Mammary epithelial cell (primary cell): ENCODE measurements at regions of chr14 and their contacts with region 1.

Region 1: DNA sequence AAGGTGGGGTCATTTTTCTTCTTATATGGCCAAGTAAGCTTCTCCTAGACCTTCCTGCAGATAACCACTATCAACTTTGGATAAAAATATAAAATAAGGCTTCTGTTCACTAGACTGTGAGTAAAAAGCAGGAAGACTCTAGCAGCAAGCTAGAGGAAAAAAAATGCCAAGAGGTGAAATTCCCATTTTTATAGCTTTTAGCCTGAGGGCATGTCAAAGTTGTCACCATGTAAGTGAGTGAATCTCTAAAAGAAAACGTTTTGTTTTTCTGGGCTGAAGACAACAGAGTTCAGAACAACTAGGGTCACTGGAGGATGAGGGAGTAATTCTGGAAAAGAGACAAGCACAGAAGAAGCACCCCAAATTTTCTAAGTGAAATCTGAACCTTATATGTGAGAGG is 143.9 kb upstream of the DIO3 start:
- DNase-seq: no peak
- H3K4me3 ChIP-seq: no peak overlapping the region
- H3K27ac ChIP-seq: no peak overlapping the region
- H3K4me1 ChIP-seq: no peaks in the 10 kb centered on the region
- H3K27me3 ChIP-seq: no peaks in the 10 kb centered on the region
- CTCF ChIP-seq: no peak

Region 2: DNA sequence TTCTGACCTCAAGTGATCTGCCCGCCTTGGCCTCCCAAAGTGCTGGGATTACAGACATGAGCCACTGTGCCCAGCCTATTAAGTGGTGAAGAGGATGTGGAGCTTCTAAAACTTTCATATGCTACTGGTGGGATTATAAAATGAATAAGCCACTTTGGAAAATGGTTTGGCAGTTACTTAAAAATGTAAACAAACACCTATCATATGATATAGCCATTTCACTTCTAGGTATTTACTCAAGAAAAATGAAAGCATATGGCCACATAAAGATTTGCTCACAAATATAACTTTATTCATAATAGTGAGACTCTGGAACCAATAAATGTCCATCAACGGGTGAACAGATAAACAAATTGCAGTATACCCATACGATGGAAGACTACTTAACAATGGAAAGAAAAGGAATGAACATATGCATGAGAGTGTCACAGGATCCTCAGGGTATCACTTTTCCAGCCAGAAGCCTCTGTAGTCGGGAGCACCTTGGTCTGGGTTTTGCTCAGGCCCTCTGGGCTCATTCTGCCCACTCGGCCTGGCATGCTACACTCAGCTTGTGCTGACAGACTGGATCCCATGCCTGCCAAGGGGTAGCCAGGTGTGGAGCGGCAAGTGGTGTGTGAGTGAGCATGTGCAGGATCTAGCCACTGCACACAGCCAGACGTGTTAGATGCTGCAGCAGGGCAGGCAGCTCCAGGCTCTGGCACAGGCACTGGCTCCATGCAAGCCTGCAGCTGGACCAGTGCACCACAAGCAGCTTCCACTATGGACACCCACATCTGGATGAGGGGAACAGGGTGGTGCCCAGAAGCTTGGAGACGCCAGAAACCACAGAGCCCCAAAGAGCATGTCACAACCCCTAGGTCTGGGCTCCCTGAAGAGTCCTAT is 69.3 kb before region 1 on chr14:
- CTCF ChIA-PET with region 1: no interaction called
- dilution Hi-C with region 1: loop called (anchors 5 kb)
- in situ Hi-C with region 1: no loop called
- intact Hi-C with region 1: no loop called
- DNase-seq: no peak
- H3K4me3 ChIP-seq: no peak overlapping the region
- H3K27ac ChIP-seq: no peak overlapping the region
- H3K4me1 ChIP-seq: no peaks in the 10 kb centered on the region
- H3K27me3 ChIP-seq: no peaks in the 10 kb centered on the region
- CTCF ChIP-seq: no peak

Region 3: GRCh38 chr14:101400830-101401229 is 16.6 kb before region 1 on chr14:
- CTCF ChIA-PET with region 1: no interaction called
- dilution Hi-C with region 1: no loop called
- in situ Hi-C with region 1: no loop called
- intact Hi-C with region 1: no loop called
- DNase-seq: no peak
- H3K4me3 ChIP-seq: no peak overlapping the region
- H3K27ac ChIP-seq: no peak overlapping the region
- H3K4me1 ChIP-seq: no peaks in the 10 kb centered on the region
- H3K27me3 ChIP-seq: no peaks in the 10 kb centered on the region
- CTCF ChIP-seq: no peak

Region 4: GRCh38 chr14:101964297-101965144 is 547.1 kb after region 1 on chr14 and contains the start of gene DYNC1H1:
- CTCF ChIA-PET with region 1: no interaction called
- dilution Hi-C with region 1: no loop called
- in situ Hi-C with region 1: no loop called
- intact Hi-C with region 1: no loop called
- DNase-seq: peak; percentile 84
- H3K4me3 ChIP-seq: peak within 1 kb of the TSS; percentile 86 to 97 (median 97)
- H3K27ac ChIP-seq: peak within 1 kb of the TSS; percentile 80
- H3K4me1 ChIP-seq: peaks cover 32% of the 10 kb centered on the region
- H3K27me3 ChIP-seq: no peaks in the 10 kb centered on the region
- CTCF ChIP-seq: no peak
- total RNA-seq, gene DYNC1H1: 557 to 626 TPM